Right lobe of liver (tissue), 6 donors: ENCODE measurements at regions of chr12 and their contacts with region 1.

Region 1: DNA sequence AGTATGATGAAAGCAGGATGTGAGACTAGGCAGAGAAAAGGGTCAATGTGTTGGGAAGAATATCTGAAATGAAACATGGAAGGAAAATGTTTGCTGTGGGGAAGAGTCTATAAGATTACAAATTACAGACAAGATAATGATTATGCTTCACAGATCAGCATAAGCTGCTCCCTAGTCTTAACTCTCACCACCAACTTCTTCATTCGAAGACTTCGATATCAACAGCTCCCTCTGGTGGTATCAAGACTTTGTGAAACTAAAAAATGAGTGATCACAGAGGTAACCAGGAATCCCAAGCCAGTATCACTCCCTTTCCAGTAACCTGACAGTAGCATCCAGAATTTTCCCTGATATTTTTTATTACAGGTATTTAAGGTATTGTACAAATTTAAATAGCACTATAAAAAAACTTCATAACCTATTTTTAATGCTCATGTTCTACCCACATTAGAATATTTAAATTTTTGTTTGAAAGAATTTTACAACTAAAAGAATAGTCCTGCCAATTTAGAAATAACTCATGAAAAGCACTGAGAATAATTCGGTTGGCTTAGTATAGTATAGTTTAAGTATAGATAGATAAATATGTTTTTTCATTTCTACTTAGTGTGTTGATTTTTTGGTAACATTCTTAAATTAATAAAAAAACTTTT is 84.4 kb downstream of the C2CD5 start:
- DNase-seq: no peak
- ATAC-seq: peak; percentile 76 to 85 (median 79)
- H3K4me3 ChIP-seq: no peak overlapping the region
- H3K27ac ChIP-seq: no peak overlapping the region
- H3K4me1 ChIP-seq: no peaks in the 10 kb centered on the region
- H3K27me3 ChIP-seq: no peaks in the 10 kb centered on the region
- CTCF ChIP-seq: peak; percentile 39 to 67 (median 66)
- POLR2A ChIP-seq: no peak

Region 2: GRCh38 chr12:22406627-22407026 is 53.3 kb before region 1 on chr12:
- intact Hi-C with region 1: no loop called
- DNase-seq: no peak
- ATAC-seq: no peak
- H3K4me3 ChIP-seq: no peak overlapping the region
- H3K27ac ChIP-seq: no peak overlapping the region
- H3K4me1 ChIP-seq: no peaks in the 10 kb centered on the region
- H3K27me3 ChIP-seq: no peaks in the 10 kb centered on the region
- CTCF ChIP-seq: no peak
- POLR2A ChIP-seq: no peak

Region 3: DNA sequence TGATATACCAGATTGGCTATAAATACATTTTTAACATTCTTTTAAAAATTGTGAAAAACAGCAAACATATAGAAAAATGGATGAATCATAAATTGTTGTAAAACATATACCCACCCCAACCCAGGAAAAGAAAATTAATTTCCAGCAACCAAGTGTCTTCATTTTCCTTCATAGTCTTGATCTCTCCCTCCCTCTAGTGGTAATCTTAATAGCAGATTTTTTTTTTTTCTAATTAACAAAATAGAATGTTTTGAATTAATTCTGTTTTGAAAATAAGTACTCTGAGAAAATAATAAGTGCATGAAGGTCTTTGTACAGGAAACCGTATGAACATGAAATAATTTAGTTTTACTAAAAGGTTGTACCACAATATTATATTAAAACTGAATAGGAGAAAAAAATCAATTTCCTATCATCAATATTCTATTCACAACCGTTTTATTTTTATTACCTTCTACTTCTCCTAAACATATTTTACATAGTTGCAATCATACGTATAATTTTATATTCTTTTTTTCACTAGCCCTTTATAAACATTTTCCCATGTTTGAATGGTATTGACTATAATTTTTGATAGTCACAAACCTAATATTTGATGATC is 172.0 kb after region 1 on chr12:
- intact Hi-C with region 1: loop called in 1 of 2 experiments (anchors 10 kb)
- DNase-seq: no peak
- ATAC-seq: peak in 3 of 4 donors; percentile 48 to 53 (median 50)
- H3K4me3 ChIP-seq: no peak overlapping the region
- H3K27ac ChIP-seq: no peak overlapping the region
- H3K4me1 ChIP-seq: peaks cover 0 to 14% (median 5%) of the 10 kb centered on the region in 4 donors
- H3K27me3 ChIP-seq: no peaks in the 10 kb centered on the region
- CTCF ChIP-seq: peak; percentile 42 to 70 (median 64)
- POLR2A ChIP-seq: no peak